ENCODE measurements at regions of chr15 and their contacts with region 1.

Region 1: GRCh38 chr15:32717426-32718226 is at the start of gene GREM1:
- DNase-seq: peak; percentile 30
- H3K4me3 ChIP-seq: peak within 1 kb of the TSS; percentile 27
- H3K27ac ChIP-seq: no peak within 1 kb of the TSS
- H3K4me1 ChIP-seq: peaks cover 7% of the 10 kb centered on the region
- H3K27me3 ChIP-seq: peaks cover 93% of the 10 kb centered on the region
- CTCF ChIP-seq: no peak
- total RNA-seq, gene GREM1: 1.5 and 2.2 TPM in 2 replicates

Region 2: GRCh38 chr15:32683906-32684584 is 33.6 kb before region 1 on chr15:
- CTCF ChIA-PET with region 1: no interaction called
- POLR2A ChIA-PET with region 1: no interaction called
- intact Hi-C with region 1: loop called (anchors 5 kb)
- DNase-seq: no peak
- H3K4me3 ChIP-seq: no peak overlapping the region
- H3K27ac ChIP-seq: no peak overlapping the region
- H3K4me1 ChIP-seq: no peaks in the 10 kb centered on the region
- H3K27me3 ChIP-seq: no peaks in the 10 kb centered on the region
- CTCF ChIP-seq: no peak

Region 3: DNA sequence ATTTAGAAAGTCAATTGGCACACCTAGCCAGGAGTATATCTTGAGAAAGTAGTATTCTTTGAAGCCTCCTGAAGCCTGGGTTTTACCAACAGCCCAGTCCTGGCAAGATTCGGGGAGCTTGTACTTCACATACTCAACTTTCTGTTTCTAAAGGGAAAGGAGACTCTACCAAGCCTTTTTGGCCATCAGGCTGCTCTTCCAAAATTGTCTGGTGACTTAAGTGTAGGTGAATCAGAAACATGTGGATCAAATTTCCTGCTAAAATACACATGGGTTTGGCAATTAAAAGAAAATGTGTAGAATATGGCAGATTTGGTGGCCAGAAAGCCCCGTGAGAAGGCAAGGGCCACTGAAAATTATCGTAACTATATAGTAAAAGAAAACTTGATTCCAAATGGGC is 15.8 kb before region 1 on chr15:
- CTCF ChIA-PET with region 1: no interaction called
- POLR2A ChIA-PET with region 1: no interaction called
- intact Hi-C with region 1: loop called (anchors 1 kb)
- DNase-seq: no peak
- H3K4me3 ChIP-seq: no peak overlapping the region
- H3K27ac ChIP-seq: no peak overlapping the region
- H3K4me1 ChIP-seq: no peaks in the 10 kb centered on the region
- H3K27me3 ChIP-seq: peaks cover 16% of the 10 kb centered on the region
- CTCF ChIP-seq: no peak